Naive thymus-derived CD8-positive, alpha-beta T cell (primary cell): ENCODE measurements at regions of chr11 and their contacts with region 1.

Region 1: GRCh38 chr11:68257475-68258362 is 14.1 kb downstream of the C11orf24 start:
- DNase-seq: peak; percentile 82 to 96 (median 91)
- ATAC-seq: peak; percentile 95 to 98
- H3K4me3 Mint-ChIP-seq: peak overlapping the region in 1 of 10 donors; percentile 42
- H3K27ac Mint-ChIP-seq: peak overlapping the region in 9 of 10 donors; percentile 49 to 85 (median 68)
- H3K4me1 Mint-ChIP-seq: peaks cover 0 to 7% (median 5%) of the 10 kb centered on the region in 4 donors
- H3K27me3 Mint-ChIP-seq: no peaks in the 10 kb centered on the region

Region 2: GRCh38 chr11:68223275-68223674 is 34.4 kb before region 1 on chr11:
- POLR2A ChIA-PET with region 1: no interaction called
- DNase-seq: no peak
- ATAC-seq: no peak
- H3K4me3 Mint-ChIP-seq: no peak overlapping the region
- H3K27ac Mint-ChIP-seq: no peak overlapping the region
- H3K4me1 Mint-ChIP-seq: peaks cover 0 to 2% (median under 1%) of the 10 kb centered on the region in 4 donors
- H3K27me3 Mint-ChIP-seq: peaks cover 0 to 4% (median 0%) of the 10 kb centered on the region in 5 donors

Region 3: GRCh38 chr11:68297812-68298658 is 40.3 kb after region 1 on chr11:
- POLR2A ChIA-PET with region 1: interaction called, 49 read pairs
- DNase-seq: peak; percentile 42 to 81 (median 72)
- ATAC-seq: peak; percentile 92 to 99
- H3K4me3 Mint-ChIP-seq: peak overlapping the region in 1 of 10 donors; percentile 19
- H3K27ac Mint-ChIP-seq: peak overlapping the region in 2 of 10 donors; percentile 48 to 51
- H3K4me1 Mint-ChIP-seq: peaks cover 5 to 23% (median 6%) of the 10 kb centered on the region in 4 donors
- H3K27me3 Mint-ChIP-seq: no peaks in the 10 kb centered on the region